T-cell (primary cell): ENCODE measurements at regions of chr1 and their contacts with region 1.

Region 1: GRCh38 chr1:117250061-117250606 is 39.4 kb upstream of the VTCN1 start:
- DNase-seq: no peak
- ATAC-seq: no peak
- H3K4me3 ChIP-seq: no peak overlapping the region
- H3K4me3 Mint-ChIP-seq: no peak overlapping the region
- H3K27ac ChIP-seq: no peak overlapping the region
- H3K27ac Mint-ChIP-seq: no peak overlapping the region
- H3K4me1 ChIP-seq: no peaks in the 10 kb centered on the region
- H3K4me1 Mint-ChIP-seq: no peaks in the 10 kb centered on the region
- H3K27me3 ChIP-seq: peaks cover 0 to 3% of the 10 kb centered on the region in 2 experiments
- H3K27me3 Mint-ChIP-seq: peaks cover 6 to 11% of the 10 kb centered on the region in 2 donors

Region 2: GRCh38 chr1:117392771-117393170 is 142.6 kb after region 1 on chr1:
- CTCF ChIA-PET with region 1: no interaction called
- POLR2A ChIA-PET with region 1: interaction called in 1 of 2 experiments, 12 read pairs
- DNase-seq: no peak
- ATAC-seq: no peak
- H3K4me3 ChIP-seq: no peak overlapping the region
- H3K4me3 Mint-ChIP-seq: no peak overlapping the region
- H3K27ac ChIP-seq: no peak overlapping the region
- H3K27ac Mint-ChIP-seq: no peak overlapping the region
- H3K4me1 ChIP-seq: peaks cover 0 to 10% of the 10 kb centered on the region in 2 experiments
- H3K4me1 Mint-ChIP-seq: peaks cover 79 to 85% (median 84%) of the 10 kb centered on the region in 3 donors
- H3K27me3 ChIP-seq: no peaks in the 10 kb centered on the region
- H3K27me3 Mint-ChIP-seq: no peaks in the 10 kb centered on the region